Calu3 (cell line): ENCODE measurements at regions of chrX and their contacts with region 1.

Region 1: GRCh38 chrX:102610905-102611304 is 11.6 kb downstream of the ARMCX5 start:
- DNase-seq: no peak
- H3K4me3 Mint-ChIP-seq: no peak overlapping the region
- H3K27ac Mint-ChIP-seq: no peak overlapping the region
- H3K4me1 Mint-ChIP-seq: no peaks in the 10 kb centered on the region
- H3K27me3 Mint-ChIP-seq: no peaks in the 10 kb centered on the region
- CTCF ChIP-seq: no peak

Region 2: DNA sequence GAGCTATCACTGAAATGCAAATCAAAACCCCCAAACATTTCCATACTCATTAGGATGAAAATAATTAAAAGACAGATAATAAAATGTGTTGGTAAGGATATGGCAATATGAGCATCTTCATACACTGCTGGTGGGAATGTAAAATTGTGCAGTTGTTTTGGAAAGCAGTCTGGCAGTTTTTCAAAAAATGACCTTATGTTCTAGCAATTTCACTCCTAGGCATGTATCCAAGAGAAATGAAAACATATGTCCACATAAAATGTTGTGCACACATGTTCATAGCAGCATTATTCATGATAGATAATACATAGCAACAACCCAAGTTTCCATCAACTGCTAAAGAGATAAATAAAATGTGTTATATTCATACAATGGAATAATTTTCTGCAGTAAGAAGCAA is 86.6 kb after region 1 on chrX:
- CTCF ChIA-PET with region 1: no interaction called
- intact Hi-C with region 1: loop called (anchors 10 kb)
- DNase-seq: no peak
- H3K4me3 Mint-ChIP-seq: no peak overlapping the region
- H3K27ac Mint-ChIP-seq: no peak overlapping the region
- H3K4me1 Mint-ChIP-seq: no peaks in the 10 kb centered on the region
- H3K27me3 Mint-ChIP-seq: no peaks in the 10 kb centered on the region
- CTCF ChIP-seq: no peak